Endothelial cell of umbilical vein (primary cell): ENCODE measurements at regions of chr1 and their contacts with region 1.

Region 1: GRCh38 chr1:228087771-228088251 is 5.3 kb downstream of the ARF1 start:
- DNase-seq: peak; percentile 94
- H3K4me3 ChIP-seq: peak overlapping the region in 1 of 3 experiments; percentile 10
- H3K27ac ChIP-seq: peak overlapping the region; percentile 94
- H3K4me1 ChIP-seq: peaks cover 79% of the 10 kb centered on the region
- H3K27me3 ChIP-seq: no peaks in the 10 kb centered on the region
- CTCF ChIP-seq: no peak
- POLR2A ChIP-seq: no peak

Region 2: GRCh38 chr1:227482023-227482299 is 605.9 kb before region 1 on chr1:
- CTCF ChIA-PET with region 1: no interaction called
- POLR2A ChIA-PET with region 1: no interaction called
- dilution Hi-C with region 1: no loop called
- intact Hi-C with region 1: loop called (anchors 5 kb)
- DNase-seq: no peak
- H3K4me3 ChIP-seq: no peak overlapping the region
- H3K27ac ChIP-seq: no peak overlapping the region
- H3K4me1 ChIP-seq: no peaks in the 10 kb centered on the region
- H3K27me3 ChIP-seq: peaks cover 2 to 28% of the 10 kb centered on the region in 2 experiments
- CTCF ChIP-seq: no peak
- POLR2A ChIP-seq: no peak

Region 3: DNA sequence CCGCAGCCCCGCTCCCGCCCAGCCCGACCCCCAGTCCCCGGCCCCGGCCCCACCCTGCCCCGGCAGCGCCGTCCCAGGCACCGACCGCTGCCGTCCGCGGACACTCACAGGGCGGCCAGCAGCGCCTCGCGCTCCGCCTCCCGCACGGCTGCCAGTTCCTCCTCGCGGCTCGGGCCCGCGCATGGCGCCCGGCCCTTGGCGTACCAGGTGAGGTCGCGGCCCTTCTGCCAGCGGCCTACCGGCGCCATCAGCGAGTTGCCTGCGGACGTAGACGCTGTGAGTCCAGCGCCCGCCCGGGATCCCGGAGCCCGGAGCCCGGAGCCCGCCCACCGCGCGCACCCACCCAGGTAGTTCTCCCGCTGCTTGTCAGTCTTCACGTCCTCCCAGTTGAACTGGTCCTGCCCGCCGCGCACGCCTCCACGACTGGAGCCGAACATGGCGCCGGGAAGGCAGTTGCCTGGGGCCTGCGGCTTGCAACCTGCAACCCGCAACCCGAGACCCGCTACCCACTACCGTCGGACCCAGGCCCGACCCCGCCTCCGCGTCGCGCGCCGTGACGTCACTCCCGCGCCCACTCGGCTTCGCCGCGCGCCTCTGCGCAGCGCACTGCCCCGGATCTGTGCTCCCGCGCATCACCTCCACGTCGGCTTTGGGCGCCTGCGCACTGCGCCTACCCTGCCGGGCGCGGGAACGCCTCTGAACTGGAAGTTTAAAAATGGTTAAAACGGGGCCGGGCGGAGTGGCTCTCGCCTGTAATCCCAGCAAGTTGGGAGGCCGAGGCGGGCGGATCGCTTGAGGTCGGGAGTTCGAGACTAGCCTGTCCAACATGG is 15.2 kb after region 1 on chr1 and contains the start of gene C1orf35:
- CTCF ChIA-PET with region 1: interaction called, 10 read pairs
- POLR2A ChIA-PET with region 1: no interaction called
- dilution Hi-C with region 1: no loop called
- intact Hi-C with region 1: loop called (anchors 1 kb)
- DNase-seq: peak; percentile 95
- H3K4me3 ChIP-seq: peak within 1 kb of the TSS; percentile 53 to 57 (median 53)
- H3K27ac ChIP-seq: peak within 1 kb of the TSS; percentile 5
- H3K4me1 ChIP-seq: peaks cover 10% of the 10 kb centered on the region
- H3K27me3 ChIP-seq: no peaks in the 10 kb centered on the region
- CTCF ChIP-seq: no peak
- POLR2A ChIP-seq: no peak
- total RNA-seq, gene C1orf35: 21.7 and 23.9 TPM in 2 replicates

Region 4: DNA sequence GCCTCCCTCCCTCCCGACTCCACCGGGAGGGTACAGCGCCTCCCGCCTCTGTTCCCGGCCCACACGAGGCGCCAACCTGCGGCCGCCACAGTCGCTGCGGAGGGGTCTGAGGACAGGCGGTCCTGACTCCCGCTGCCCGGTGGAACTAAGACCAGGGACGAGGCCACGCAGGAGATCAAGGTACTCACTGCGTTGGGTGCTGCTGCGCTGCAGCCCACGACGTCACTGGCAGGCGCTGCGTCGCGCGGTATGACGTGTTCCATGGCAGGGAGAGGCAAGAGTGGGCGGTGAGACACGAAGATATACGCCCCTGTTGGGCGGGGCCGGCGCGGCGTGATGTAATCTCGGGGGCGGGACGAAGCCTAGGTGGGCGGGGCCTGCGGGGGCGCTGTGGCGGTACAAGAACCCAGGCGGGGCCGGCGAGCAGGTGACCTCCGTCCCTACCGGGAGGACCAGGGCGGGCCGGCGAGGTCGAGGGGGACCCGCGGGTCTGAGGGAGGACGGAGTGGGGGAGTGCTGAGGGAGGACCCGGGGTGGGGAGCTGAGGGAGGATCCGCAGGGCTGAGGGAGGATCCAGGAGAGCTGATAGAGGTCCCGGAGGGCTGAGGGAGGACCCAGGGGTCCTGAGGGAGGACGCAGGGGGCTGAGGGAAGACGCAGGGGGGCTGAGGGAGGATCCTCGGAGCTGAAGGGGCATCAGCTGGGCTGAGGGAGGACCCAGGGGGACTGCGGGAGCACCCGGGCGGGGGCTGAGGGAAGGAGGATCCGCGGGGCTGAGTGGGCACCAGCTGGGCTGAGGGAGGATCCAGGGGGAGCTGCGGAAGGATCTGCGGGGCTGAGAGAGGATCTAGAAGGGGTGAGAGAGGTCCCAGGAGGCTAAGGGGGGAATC is 21.5 kb after region 1 on chr1 and contains the start of gene MRPL55:
- CTCF ChIA-PET with region 1: interaction called, 3 read pairs
- POLR2A ChIA-PET with region 1: no interaction called
- dilution Hi-C with region 1: no loop called
- intact Hi-C with region 1: loop called (anchors 1 kb)
- DNase-seq: peak; percentile 98
- H3K4me3 ChIP-seq: peak within 1 kb of the TSS; percentile 29 to 92 (median 63)
- H3K27ac ChIP-seq: peak within 1 kb of the TSS; percentile 32
- H3K4me1 ChIP-seq: peaks cover 13% of the 10 kb centered on the region
- H3K27me3 ChIP-seq: no peaks in the 10 kb centered on the region
- CTCF ChIP-seq: no peak
- POLR2A ChIP-seq: peak; percentile 82
- total RNA-seq, gene MRPL55: 57.0 and 58.7 TPM in 2 replicates

Region 5: DNA sequence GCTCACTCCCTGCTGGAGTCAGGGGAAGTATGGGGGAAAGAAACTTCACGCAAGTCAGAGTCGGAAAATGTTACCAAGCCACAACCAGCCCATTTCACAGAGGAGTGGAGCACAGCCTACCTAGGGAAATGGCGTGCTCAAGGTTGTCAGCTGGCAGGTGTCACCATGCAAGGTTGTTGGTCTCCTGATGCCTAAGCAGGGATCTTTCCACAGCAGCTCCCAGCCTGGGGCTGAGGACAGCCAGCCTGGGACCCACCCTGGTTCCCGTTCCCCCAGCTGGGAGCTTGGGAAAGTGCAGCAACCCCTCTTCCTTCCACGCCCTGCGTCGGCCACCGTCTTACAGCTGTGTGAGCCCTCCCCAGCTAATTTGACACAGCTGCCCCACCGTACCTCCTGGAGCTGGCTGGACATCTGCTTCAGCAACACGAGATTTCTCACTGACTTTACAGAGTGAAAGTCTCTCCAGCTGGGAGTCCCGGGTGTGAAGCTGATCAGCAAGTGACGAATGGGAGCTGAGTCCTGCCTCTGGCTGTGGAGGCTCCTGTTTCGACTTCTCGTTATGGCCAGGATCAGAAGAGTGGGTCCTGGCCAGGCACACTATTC is 958.5 kb after region 1 on chr1:
- CTCF ChIA-PET with region 1: no interaction called
- POLR2A ChIA-PET with region 1: no interaction called
- dilution Hi-C with region 1: no loop called
- intact Hi-C with region 1: no loop called
- DNase-seq: no peak
- H3K4me3 ChIP-seq: no peak overlapping the region
- H3K27ac ChIP-seq: no peak overlapping the region
- H3K4me1 ChIP-seq: no peaks in the 10 kb centered on the region
- H3K27me3 ChIP-seq: peaks cover 0 to 2% of the 10 kb centered on the region in 2 experiments
- CTCF ChIP-seq: no peak
- POLR2A ChIP-seq: no peak